GM12878 (cell line): ENCODE measurements at regions of chr4 and their contacts with region 1.

Region 1: GRCh38 chr4:146310319-146311021 is 96.1 kb downstream of the REELD1 start:
- DNase-seq: peak; percentile 35
- ATAC-seq: peak; percentile 91
- H3K4me3 ChIP-seq: no peak overlapping the region
- H3K27ac ChIP-seq: peak overlapping the region; percentile 55; the same call in 1 of the 2 replicates
- H3K4me1 ChIP-seq: peaks cover 18% of the 10 kb centered on the region
- H3K27me3 ChIP-seq: no peaks in the 10 kb centered on the region
- CTCF ChIP-seq: no peak
- EP300 ChIP-seq: 0 out of 4 replicates have a peak, but pooled peaks of 1 of the 2 experiments have one; percentile 15
- POLR2A ChIP-seq: no peak
- RAD21 ChIP-seq: no peak

Region 2: GRCh38 chr4:145868637-145869409 is 441.6 kb before region 1 on chr4:
- CTCF ChIA-PET with region 1: no interaction called
- POLR2A ChIA-PET with region 1: no interaction called
- RAD21 ChIA-PET with region 1: no interaction called
- SMC1A ChIA-PET with region 1: no interaction called
- in situ Hi-C with region 1: no loop called
- intact Hi-C with region 1: no loop called
- DNase-seq: no peak
- ATAC-seq: peak; percentile 80
- H3K4me3 ChIP-seq: no peak overlapping the region
- H3K27ac ChIP-seq: no peak overlapping the region; the same call in 1 of the 2 replicates
- H3K4me1 ChIP-seq: peaks cover 45% of the 10 kb centered on the region
- H3K27me3 ChIP-seq: no peaks in the 10 kb centered on the region
- CTCF ChIP-seq: peak in 2 of 3 experiments; percentile 8 to 19; a peak in 2 of 6 replicates
- EP300 ChIP-seq: no peak
- POLR2A ChIP-seq: no peak
- RAD21 ChIP-seq: peak; percentile 14; the same call in 1 of the 2 replicates

Region 3: GRCh38 chr4:146333187-146333894 is 22.9 kb after region 1 on chr4:
- CTCF ChIA-PET with region 1: interaction called, 4 read pairs
- POLR2A ChIA-PET with region 1: interaction called, 7 read pairs
- RAD21 ChIA-PET with region 1: interaction called, 9 read pairs
- SMC1A ChIA-PET with region 1: interaction called, 36 read pairs
- in situ Hi-C with region 1: no loop called
- intact Hi-C with region 1: no loop called
- DNase-seq: peak; percentile 59
- ATAC-seq: peak; percentile 88
- H3K4me3 ChIP-seq: peak overlapping the region; percentile 54
- H3K27ac ChIP-seq: peak overlapping the region; percentile 38
- H3K4me1 ChIP-seq: peaks cover 13% of the 10 kb centered on the region; the same call in 1 of the 2 replicates
- H3K27me3 ChIP-seq: no peaks in the 10 kb centered on the region
- CTCF ChIP-seq: no peak
- EP300 ChIP-seq: no peak
- POLR2A ChIP-seq: no peak
- RAD21 ChIP-seq: no peak